Right ventricle myocardium inferior (tissue), 1 donor: ENCODE measurements at regions of chr6 and their contacts with region 1.

Region 1: GRCh38 chr6:108896111-108896661 is 48.0 kb downstream of the ARMC2 start:
- DNase-seq: no peak
- ATAC-seq: no peak

Region 2: GRCh38 chr6:108541838-108542759 is 354.1 kb before region 1 on chr6:
- intact Hi-C with region 1: loop called (anchors 1 kb)
- DNase-seq: peak; percentile 83
- ATAC-seq: peak; percentile 77

Region 3: DNA sequence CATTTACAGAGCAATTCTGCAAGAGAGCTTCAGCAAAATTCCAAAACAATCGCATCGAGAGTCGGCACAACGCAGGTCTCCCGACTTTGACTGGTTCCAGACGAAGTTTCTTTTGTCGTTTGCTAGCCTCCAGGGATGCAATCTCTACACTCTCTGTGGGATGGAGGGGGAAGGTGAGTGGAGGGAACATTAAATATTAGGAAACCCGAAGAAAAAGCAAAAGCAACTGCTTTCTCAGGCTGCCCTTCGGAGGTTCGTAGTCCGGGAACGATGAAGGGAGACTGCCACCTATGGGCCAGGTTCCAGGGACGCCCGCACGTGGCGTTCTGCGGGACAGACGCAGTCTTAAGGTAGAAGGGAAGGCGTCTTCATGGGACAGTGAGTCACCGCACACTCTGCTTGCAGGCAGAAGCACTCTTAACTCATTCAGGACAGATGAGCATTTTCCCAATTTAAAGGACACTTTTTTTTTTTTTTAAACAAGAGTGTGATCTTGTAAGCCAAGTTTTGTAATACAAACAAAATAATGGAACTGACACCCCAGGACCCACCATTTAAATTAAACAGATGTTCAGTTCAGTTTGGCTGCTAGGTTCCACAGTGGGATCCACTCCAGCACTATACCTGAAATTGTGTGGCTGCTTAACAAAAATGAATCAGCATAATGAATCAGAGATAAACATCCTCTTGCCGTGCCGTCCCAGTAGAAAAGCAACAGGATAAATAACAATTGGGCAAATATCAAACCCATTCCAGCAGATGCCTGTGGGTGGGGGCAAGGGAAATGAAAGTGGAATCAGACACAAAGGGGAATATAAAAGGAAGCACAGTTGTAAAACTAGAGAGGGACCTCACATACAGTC is 113.8 kb before region 1 on chr6:
- intact Hi-C with region 1: loop called (anchors 10 kb)
- DNase-seq: peak; percentile 92
- ATAC-seq: peak; percentile 91

Region 4: GRCh38 chr6:108848116-108848868 is 47.9 kb before region 1 on chr6 and contains the start of gene ARMC2:
- intact Hi-C with region 1: loop called (anchors 2 kb)
- DNase-seq: peak; percentile 98
- ATAC-seq: peak; percentile 98
- total RNA-seq, gene ARMC2: 9.5 TPM

Region 5: DNA sequence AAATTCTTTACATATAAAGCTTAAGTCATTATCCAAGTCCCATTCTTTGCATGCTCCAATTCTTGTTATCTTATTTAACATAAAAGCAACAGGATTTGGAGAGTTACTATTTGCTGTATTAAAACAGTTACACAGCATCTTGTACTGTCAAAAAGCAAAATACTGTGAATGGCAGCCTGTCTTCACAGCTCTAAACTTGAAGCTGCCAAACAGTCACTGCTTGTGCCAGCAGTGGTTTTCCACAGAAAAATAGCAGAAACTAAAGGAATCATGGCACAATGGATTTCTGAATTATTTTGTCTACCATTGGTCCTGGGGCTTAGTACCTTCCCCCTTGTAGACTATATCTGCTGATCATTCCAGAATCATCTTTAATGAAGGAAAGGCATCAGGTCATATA is 91.0 kb after region 1 on chr6:
- intact Hi-C with region 1: loop called (anchors 2 kb)
- DNase-seq: no peak
- ATAC-seq: no peak

Region 6: DNA sequence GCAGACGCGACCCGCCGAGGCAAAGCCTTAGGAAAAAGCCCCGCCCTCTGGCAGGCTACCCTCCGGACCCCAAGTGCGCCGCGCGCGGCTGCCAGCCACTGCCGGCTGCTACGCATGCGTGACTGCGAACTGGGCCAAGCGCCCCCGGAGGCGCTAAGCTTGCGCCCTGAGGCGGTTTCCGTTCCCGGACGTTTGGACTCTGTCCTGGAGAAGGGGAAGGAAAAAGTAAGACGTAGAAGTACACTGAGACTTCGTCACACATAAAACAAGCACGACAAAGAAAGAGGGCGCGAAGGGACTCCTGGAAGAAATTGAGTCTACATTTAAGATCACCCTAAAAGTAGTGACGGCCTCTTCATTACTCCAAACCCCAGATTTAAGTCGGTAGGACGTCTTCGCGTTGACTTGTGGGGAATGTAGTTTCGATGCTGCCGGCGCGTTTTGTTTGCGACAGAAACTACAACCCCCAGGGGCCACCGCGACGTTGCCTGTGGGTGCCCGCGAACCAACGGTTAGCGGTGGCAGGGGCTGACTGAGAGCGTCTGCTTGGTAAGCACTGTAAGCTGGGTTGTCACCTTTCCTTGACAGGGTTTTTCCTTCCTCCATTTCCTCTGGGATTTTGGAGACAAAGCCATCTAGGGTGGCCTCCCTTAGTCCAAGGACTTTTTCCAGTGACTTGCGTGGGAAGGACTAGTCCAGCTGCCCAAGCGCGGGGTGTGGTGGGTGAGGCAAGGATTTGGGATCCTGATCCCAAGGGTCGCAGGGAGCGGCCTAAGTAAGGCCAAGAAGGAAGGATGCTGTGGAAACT is 199.0 kb after region 1 on chr6 and contains the start of gene CEP57L1:
- intact Hi-C with region 1: loop called (anchors 5 kb)
- DNase-seq: peak; percentile 99
- ATAC-seq: peak; percentile 73
- total RNA-seq, gene CEP57L1: 7.7 TPM